Common myeloid progenitor, CD34-positive (primary cell): ENCODE measurements at regions of chr10 and their contacts with region 1.

Region 1: GRCh38 chr10:79116801-79117723 is 48.3 kb downstream of the ZMIZ1 start:
- DNase-seq: no peak
- H3K4me3 ChIP-seq: no peak overlapping the region
- H3K27ac ChIP-seq: peak overlapping the region; percentile 1 to 49
- H3K4me1 ChIP-seq: peaks cover 0 to 62% (median 52%) of the 10 kb centered on the region in 4 experiments
- H3K27me3 ChIP-seq: no peaks in the 10 kb centered on the region

Region 2: DNA sequence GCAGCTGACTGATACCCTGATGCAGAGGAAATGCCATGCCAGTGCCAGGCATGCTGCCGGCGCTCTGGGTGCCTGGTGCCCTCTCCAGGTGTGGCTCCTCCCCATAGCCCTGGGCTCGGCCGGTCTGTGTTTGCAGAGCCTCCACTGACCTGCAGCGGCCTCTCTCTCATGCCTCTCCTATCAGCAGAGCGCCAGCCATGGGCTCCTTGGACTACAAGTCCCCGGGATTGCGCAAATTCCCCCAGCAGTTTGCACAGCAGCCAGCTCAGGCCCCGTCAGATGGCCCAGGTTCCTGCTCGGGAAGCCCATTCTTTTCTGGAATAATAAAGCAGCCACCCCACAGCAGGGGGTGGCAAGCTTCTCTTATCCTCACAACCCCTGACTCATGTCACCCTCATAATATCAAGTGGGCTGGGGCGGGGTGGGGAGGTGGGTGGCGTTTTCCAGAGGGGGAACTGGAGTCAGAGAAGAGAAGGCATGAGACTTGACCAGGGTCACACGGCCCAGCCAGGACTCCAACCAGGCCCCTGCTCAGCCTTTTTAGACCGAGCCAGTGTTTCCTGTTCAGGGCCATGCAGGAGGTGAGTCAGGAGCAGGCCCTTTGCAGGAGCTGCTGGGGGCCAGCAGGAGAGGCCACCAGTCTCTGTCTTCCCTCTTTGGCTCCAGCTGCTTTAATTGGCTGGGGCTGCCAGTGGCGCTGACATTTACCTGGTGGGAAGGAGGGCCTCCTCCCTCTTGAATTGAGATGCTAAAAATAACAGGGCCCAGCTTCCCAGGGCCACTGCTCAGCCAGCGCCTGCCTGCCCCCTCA is 10.3 kb after region 1 on chr10:
- CTCF ChIA-PET with region 1: interaction called, 16 read pairs
- POLR2A ChIA-PET with region 1: interaction called, 3 read pairs
- DNase-seq: peak in 1 of 3 donors; percentile 40
- H3K4me3 ChIP-seq: no peak overlapping the region
- H3K27ac ChIP-seq: peak overlapping the region in 1 of 2 experiments; percentile 46
- H3K4me1 ChIP-seq: peaks cover 13 to 95% (median 78%) of the 10 kb centered on the region in 4 experiments
- H3K27me3 ChIP-seq: no peaks in the 10 kb centered on the region